Right ventricle myocardium superior (tissue), 1 donor: ENCODE measurements at regions of chr11 and their contacts with region 1.

Region 1: DNA sequence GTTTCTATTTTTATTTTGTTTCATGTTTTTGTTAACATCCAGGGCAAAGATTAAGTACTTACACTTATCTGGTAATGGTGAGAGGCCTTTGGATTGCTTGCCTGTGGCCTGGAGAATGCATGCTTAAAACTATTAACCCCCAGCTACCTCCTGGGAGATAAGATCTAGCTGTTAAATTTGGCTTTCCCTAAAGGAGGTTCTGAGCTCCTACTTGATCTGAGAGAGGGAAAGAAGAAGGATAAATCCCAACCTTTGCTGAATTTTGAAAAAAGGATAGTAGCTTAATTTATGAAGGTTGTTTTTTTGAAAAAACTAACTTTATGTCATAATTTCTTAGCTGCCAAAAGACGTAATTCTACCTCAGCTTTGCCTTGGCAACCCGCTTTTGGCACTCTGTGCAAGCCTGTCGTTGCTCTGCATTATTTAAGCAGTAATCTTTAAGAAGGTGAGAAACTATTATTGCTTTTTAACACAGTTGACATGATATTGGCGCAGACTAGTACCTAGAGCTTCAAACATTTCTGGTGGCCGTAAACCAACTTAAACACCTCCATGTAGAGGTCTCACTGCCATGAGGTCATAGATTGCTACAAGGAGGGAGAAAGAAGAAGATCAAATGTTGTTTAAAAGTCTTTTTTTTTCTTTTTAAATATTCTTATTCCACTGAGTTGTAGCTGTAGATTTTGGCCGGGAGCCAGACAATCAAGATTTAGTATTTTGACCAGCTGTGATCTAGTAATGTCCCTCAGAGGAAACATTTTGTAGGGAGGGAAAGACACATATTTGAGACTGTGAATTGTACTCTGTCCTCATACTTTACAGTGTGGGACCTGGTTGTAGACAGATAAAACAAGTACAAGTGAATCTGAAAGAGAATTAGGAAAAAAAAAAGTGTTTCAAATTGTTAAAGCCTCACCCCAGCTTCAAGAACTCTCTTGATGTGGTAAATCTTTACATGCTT is 74.4 kb downstream of the WNT11 start:
- DNase-seq: no peak
- ATAC-seq: peak; percentile 84

Region 2: GRCh38 chr11:76074148-76075095 is 57.5 kb before region 1 on chr11:
- intact Hi-C with region 1: loop called (anchors 10 kb)
- DNase-seq: no peak
- ATAC-seq: peak; percentile 55